Breast epithelium (tissue), 4 donors: ENCODE measurements at regions of chr17 and their contacts with region 1.

Region 1: DNA sequence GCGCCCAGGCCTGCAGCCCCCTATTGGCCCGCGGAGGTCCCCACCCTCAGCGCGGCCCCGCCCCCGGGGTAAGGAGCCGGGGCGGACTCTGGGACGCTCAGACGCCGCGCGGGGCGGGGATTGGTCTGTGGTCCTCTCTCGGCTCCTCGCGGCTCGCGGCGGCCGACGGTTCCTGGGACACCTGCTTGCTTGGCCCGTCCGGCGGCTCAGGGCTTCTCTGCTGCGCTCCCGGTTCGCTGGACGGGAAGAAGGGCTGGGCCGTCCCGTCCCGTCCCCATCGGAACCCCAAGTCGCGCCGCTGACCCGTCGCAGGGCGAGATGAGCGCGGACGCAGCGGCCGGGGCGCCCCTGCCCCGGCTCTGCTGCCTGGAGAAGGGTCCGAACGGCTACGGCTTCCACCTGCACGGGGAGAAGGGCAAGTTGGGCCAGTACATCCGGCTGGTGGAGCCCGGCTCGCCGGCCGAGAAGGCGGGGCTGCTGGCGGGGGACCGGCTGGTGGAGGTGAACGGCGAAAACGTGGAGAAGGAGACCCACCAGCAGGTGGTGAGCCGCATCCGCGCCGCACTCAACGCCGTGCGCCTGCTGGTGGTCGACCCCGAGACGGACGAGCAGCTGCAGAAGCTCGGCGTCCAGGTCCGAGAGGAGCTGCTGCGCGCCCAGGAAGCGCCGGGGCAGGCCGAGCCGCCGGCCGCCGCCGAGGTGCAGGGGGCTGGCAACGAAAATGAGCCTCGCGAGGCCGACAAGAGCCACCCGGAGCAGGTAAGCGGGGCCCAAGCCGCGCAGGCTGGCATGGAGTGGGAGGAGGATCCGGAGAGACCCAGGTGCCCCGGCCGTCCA is at the start of gene NHERF1:
- DNase-seq: peak; percentile 95 to 96
- H3K4me3 ChIP-seq: peak within 1 kb of the TSS; percentile 81 to 93 (median 90)
- H3K27ac ChIP-seq: peak within 1 kb of the TSS; percentile 82 to 89
- H3K4me1 ChIP-seq: peaks cover 0 to 4% of the 10 kb centered on the region in 2 donors
- H3K27me3 ChIP-seq: no peaks in the 10 kb centered on the region
- CTCF ChIP-seq: peak in 1 of 3 donors; percentile 27
- POLR2A ChIP-seq: peak; percentile 89
- total RNA-seq, gene NHERF1: 15.8 to 82.8 (median 36.4) TPM

Region 2: DNA sequence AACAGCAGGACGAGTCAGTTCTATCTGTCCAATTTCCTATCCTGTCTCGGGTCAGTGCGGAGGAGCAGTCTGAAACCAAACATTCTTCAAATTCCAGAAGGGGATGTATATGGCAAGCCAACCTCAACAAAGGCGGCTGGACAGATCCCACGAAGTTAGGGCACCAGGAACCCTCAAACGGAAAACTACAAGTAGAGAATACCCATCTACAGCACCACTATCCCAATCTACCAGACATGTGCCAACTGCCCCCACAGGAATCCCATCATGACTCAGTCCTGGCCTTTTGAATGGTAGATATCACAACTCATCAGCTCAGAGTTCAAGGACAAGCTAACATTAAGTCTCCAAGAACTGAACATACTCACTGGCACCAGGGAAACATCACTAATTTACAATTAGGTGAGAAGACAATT is 25.1 kb after region 1 on chr17:
- intact Hi-C with region 1: loop called (anchors 2 kb)
- DNase-seq: no peak
- H3K4me3 ChIP-seq: no peak overlapping the region
- H3K27ac ChIP-seq: no peak overlapping the region
- H3K4me1 ChIP-seq: peaks cover 6 to 13% of the 10 kb centered on the region in 2 donors
- H3K27me3 ChIP-seq: no peaks in the 10 kb centered on the region
- CTCF ChIP-seq: no peak
- POLR2A ChIP-seq: no peak

Region 3: GRCh38 chr17:74870512-74870911 is 121.8 kb after region 1 on chr17:
- intact Hi-C with region 1: loop called (anchors 2 kb)
- DNase-seq: no peak
- H3K4me3 ChIP-seq: no peak overlapping the region
- H3K27ac ChIP-seq: no peak overlapping the region
- H3K4me1 ChIP-seq: peaks cover 0 to 5% of the 10 kb centered on the region in 2 donors
- H3K27me3 ChIP-seq: no peaks in the 10 kb centered on the region
- CTCF ChIP-seq: no peak
- POLR2A ChIP-seq: no peak